ENCODE measurements at regions of chr19 and their contacts with region 1.

Region 1: DNA sequence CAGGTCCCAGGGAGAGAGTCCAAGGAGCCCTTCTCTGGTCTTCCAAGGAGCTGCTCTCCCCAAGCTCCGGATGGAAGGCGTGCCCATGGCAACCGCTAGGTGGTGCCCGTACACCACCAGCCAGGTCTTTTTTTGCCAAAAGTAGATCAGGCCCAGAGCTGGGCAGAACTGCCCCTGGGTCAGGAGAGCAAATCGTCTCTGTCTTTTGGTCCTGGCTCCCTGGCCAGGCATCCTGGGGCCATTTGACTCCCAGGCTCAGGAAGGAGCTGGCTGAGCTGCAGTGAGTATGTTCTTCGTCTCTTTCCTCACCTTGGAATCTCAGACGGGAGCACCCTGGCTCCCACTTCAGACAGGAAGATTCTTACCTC is 24.6 kb upstream of the BCL3 start:
- DNase-seq: peak; percentile 73 to 83 (median 74)
- H3K4me3 ChIP-seq: no peak overlapping the region
- H3K4me3 Mint-ChIP-seq: no peak overlapping the region
- H3K27ac ChIP-seq: no peak overlapping the region
- H3K27ac Mint-ChIP-seq: peak overlapping the region in 3 of 7 donors; percentile 13 to 77 (median 60)
- H3K4me1 ChIP-seq: peaks cover 15% of the 10 kb centered on the region
- H3K4me1 Mint-ChIP-seq: peaks cover 11 to 24% (median 14%) of the 10 kb centered on the region in 4 donors
- H3K27me3 ChIP-seq: no peaks in the 10 kb centered on the region
- H3K27me3 Mint-ChIP-seq: no peaks in the 10 kb centered on the region

Region 2: DNA sequence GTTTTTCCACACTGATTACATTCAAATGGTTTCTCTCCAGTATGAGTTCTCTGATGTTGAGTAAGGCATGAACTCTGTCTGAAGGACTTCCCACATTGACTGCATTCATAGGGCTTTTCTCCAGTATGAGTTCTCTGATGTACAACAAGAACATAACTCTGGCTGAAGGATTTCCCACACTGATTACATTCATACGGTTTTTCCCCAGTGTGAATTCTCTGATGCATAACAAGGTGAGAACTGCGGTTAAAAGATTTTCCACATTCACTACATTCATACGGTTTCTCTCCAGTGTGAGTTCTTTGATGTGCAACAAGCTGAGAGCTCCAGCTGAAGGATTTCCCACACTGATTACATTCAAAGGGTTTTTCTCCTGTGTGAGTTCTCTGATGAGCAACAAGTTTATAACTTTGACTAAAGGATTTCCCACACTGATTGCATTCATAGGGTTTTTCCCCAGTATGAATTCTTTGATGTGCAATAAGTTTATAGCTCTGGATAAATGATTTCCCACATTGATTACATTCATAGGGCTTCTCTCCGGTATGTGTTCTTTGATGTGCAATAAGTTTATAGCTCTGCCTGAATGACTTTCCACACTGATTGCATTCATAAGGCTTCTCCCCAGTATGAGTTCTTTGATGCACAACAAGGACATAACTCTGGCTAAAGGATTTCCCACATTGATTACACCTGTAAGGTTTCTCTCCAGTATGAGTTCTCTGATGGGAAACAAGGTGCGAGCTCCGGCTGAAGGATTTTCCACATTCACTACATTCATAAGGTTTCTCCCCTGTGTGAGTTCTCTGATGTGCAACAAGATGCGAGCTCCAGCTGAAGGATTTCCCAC is 247.2 kb before region 1 on chr19:
- CTCF ChIA-PET with region 1: no interaction called
- POLR2A ChIA-PET with region 1: no interaction called
- intact Hi-C with region 1: no loop called
- DNase-seq: peak in 3 of 5 donors; percentile 12 to 18 (median 16)
- H3K4me3 ChIP-seq: peak overlapping the region in 1 of 2 donors; percentile 1
- H3K4me3 Mint-ChIP-seq: peak overlapping the region in 3 of 8 donors; percentile 5 to 34 (median 18)
- H3K27ac ChIP-seq: no peak overlapping the region
- H3K27ac Mint-ChIP-seq: peak overlapping the region in 2 of 7 donors; percentile 35 to 73
- H3K4me1 ChIP-seq: no peaks in the 10 kb centered on the region
- H3K4me1 Mint-ChIP-seq: no peaks in the 10 kb centered on the region
- H3K27me3 ChIP-seq: no peaks in the 10 kb centered on the region
- H3K27me3 Mint-ChIP-seq: no peaks in the 10 kb centered on the region

Region 3: GRCh38 chr19:44712864-44713515 is 10.9 kb before region 1 on chr19:
- CTCF ChIA-PET with region 1: interaction called, 35 read pairs
- POLR2A ChIA-PET with region 1: no interaction called
- intact Hi-C with region 1: no loop called
- DNase-seq: no peak
- H3K4me3 ChIP-seq: no peak overlapping the region
- H3K4me3 Mint-ChIP-seq: no peak overlapping the region
- H3K27ac ChIP-seq: no peak overlapping the region
- H3K27ac Mint-ChIP-seq: peak overlapping the region in 1 of 7 donors; percentile 11
- H3K4me1 ChIP-seq: no peaks in the 10 kb centered on the region
- H3K4me1 Mint-ChIP-seq: no peaks in the 10 kb centered on the region
- H3K27me3 ChIP-seq: no peaks in the 10 kb centered on the region
- H3K27me3 Mint-ChIP-seq: no peaks in the 10 kb centered on the region

Region 4: GRCh38 chr19:44746946-44747738 is 23.2 kb after region 1 on chr19:
- CTCF ChIA-PET with region 1: interaction called, 41 read pairs
- POLR2A ChIA-PET with region 1: interaction called, 6 read pairs
- intact Hi-C with region 1: no loop called
- DNase-seq: peak; percentile 81 to 95 (median 86)
- H3K4me3 ChIP-seq: peak overlapping the region; percentile 66
- H3K4me3 Mint-ChIP-seq: peak overlapping the region; percentile 89 to 99 (median 96)
- H3K27ac ChIP-seq: peak overlapping the region; percentile 98
- H3K27ac Mint-ChIP-seq: peak overlapping the region; percentile 85 to 100 (median 97)
- H3K4me1 ChIP-seq: peaks cover 44% of the 10 kb centered on the region
- H3K4me1 Mint-ChIP-seq: peaks cover 30 to 67% (median 45%) of the 10 kb centered on the region in 4 donors
- H3K27me3 ChIP-seq: no peaks in the 10 kb centered on the region
- H3K27me3 Mint-ChIP-seq: no peaks in the 10 kb centered on the region

Region 5: DNA sequence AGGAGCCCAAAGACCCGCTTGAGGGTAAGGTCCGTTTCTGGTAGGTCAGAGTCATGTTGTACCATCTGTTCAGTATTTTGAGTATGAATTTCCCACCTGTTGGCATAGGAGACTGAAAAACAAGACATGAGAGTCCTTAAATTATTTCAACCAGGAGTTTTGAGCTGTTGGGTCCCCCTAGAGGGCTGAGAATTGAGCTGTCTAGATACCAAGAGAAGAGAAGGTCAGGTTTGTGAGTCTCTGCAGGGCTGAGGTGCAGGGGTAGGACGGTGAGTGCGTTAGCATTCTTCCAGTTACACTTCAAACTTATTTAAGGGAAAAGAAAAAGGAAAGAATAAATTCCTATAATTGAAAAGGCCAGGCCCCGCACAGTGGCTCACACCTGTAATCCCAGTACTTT is 58.8 kb after region 1 on chr19:
- CTCF ChIA-PET with region 1: interaction called, 14 read pairs
- POLR2A ChIA-PET with region 1: no interaction called
- intact Hi-C with region 1: no loop called
- DNase-seq: no peak
- H3K4me3 ChIP-seq: no peak overlapping the region
- H3K4me3 Mint-ChIP-seq: no peak overlapping the region
- H3K27ac ChIP-seq: no peak overlapping the region
- H3K27ac Mint-ChIP-seq: no peak overlapping the region
- H3K4me1 ChIP-seq: peaks cover 3% of the 10 kb centered on the region
- H3K4me1 Mint-ChIP-seq: peaks cover 4 to 7% (median 6%) of the 10 kb centered on the region in 4 donors
- H3K27me3 ChIP-seq: no peaks in the 10 kb centered on the region
- H3K27me3 Mint-ChIP-seq: peaks cover 0 to 7% of the 10 kb centered on the region in 2 donors

Region 6: GRCh38 chr19:45340232-45340898 is 616.4 kb after region 1 on chr19 and contains the start of gene KLC3:
- CTCF ChIA-PET with region 1: no interaction called
- POLR2A ChIA-PET with region 1: no interaction called
- intact Hi-C with region 1: no loop called
- DNase-seq: peak in 4 of 5 donors; percentile 21 to 42 (median 31)
- H3K4me3 ChIP-seq: no peak within 1 kb of the TSS
- H3K4me3 Mint-ChIP-seq: peak within 1 kb of the TSS; percentile 16 to 77 (median 37)
- H3K27ac ChIP-seq: no peak within 1 kb of the TSS
- H3K27ac Mint-ChIP-seq: no peak within 1 kb of the TSS
- H3K4me1 ChIP-seq: no peaks in the 10 kb centered on the region
- H3K4me1 Mint-ChIP-seq: peaks cover 2 to 6% (median 4%) of the 10 kb centered on the region in 4 donors
- H3K27me3 ChIP-seq: peaks cover 5% of the 10 kb centered on the region
- H3K27me3 Mint-ChIP-seq: peaks cover 20 to 26% of the 10 kb centered on the region in 2 donors
- total RNA-seq, gene KLC3: not detected